ENCODE measurements at regions of chr3 and their contacts with region 1.

Region 1: GRCh38 chr3:129278439-129278970 is at the start of gene HMCES:
- DNase-seq: peak; percentile 85 to 93
- H3K4me3 ChIP-seq: peak within 1 kb of the TSS; percentile 81
- H3K4me3 Mint-ChIP-seq: peak within 1 kb of the TSS; percentile 98
- H3K27ac Mint-ChIP-seq: peak within 1 kb of the TSS; percentile 98
- H3K4me1 ChIP-seq: peaks cover 7% of the 10 kb centered on the region
- H3K4me1 Mint-ChIP-seq: peaks cover 15% of the 10 kb centered on the region
- H3K27me3 ChIP-seq: no peaks in the 10 kb centered on the region
- H3K27me3 Mint-ChIP-seq: no peaks in the 10 kb centered on the region
- CTCF ChIP-seq: no peak
- total RNA-seq, gene HMCES: 47.7 and 47.9 TPM in 2 replicates

Region 2: GRCh38 chr3:129316131-129317013 is 37.9 kb after region 1 on chr3:
- CTCF ChIA-PET with region 1: interaction called, 7 read pairs
- POLR2A ChIA-PET with region 1: interaction called, 17 read pairs
- intact Hi-C with region 1: loop called (anchors 2 kb)
- DNase-seq: peak; percentile 89 to 94
- H3K4me3 ChIP-seq: peak overlapping the region; percentile 96
- H3K4me3 Mint-ChIP-seq: peak overlapping the region; percentile 89
- H3K27ac Mint-ChIP-seq: peak overlapping the region; percentile 91
- H3K4me1 ChIP-seq: peaks cover 11% of the 10 kb centered on the region
- H3K4me1 Mint-ChIP-seq: peaks cover 7% of the 10 kb centered on the region
- H3K27me3 ChIP-seq: no peaks in the 10 kb centered on the region
- H3K27me3 Mint-ChIP-seq: no peaks in the 10 kb centered on the region
- CTCF ChIP-seq: peak; percentile 49 to 66

Region 3: DNA sequence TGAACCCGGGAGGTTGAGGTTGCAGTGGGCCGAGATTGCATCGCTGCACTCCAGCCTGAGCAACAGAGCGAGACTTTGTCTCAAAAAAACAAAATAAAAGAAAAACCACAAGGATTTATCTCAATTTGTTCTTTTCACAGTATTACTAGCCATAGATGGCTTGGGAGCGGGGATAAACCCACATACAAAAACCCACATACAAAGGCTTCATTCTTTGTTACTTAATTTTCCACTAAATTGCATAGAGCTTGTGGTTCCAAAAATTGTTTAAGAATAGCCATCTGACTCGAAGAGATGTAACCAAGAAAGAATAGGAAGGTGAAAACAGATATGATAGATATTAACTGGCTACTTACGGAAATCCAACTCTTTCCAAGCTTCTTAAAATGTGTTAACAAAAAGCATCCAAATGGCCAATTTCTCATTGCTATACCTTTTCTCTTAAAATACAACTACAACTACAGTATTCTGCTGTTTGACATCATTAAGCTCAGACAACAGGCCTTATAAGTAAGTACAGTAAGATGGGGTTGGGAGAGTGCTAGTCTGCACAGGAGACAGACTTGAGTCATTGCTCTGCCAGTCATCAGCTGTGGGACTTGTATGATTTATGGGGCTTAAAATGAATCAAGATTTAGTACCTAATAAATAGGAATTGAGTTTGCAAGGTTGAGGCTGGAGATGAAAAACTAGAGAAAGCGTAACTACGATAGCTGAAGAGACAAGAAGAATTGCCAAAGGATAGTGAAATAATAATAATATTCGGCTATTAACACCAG is 424.6 kb after region 1 on chr3:
- CTCF ChIA-PET with region 1: no interaction called
- POLR2A ChIA-PET with region 1: no interaction called
- intact Hi-C with region 1: no loop called
- DNase-seq: no peak
- H3K4me3 ChIP-seq: no peak overlapping the region
- H3K4me3 Mint-ChIP-seq: no peak overlapping the region
- H3K27ac Mint-ChIP-seq: no peak overlapping the region
- H3K4me1 ChIP-seq: no peaks in the 10 kb centered on the region
- H3K4me1 Mint-ChIP-seq: peaks cover 11% of the 10 kb centered on the region
- H3K27me3 ChIP-seq: no peaks in the 10 kb centered on the region
- H3K27me3 Mint-ChIP-seq: no peaks in the 10 kb centered on the region
- CTCF ChIP-seq: no peak

Measured in Caco-2 (cell line).